ENCODE measurements at regions of chr2 and their contacts with region 1.

Region 1: GRCh38 chr2:125572660-125573059 is 1083.3 kb upstream of the GYPC start:
- DNase-seq: no peak
- H3K4me3 ChIP-seq: no peak overlapping the region
- H3K27ac ChIP-seq: no peak overlapping the region
- H3K4me1 ChIP-seq: no peaks in the 10 kb centered on the region
- H3K27me3 ChIP-seq: no peaks in the 10 kb centered on the region
- CTCF ChIP-seq: no peak
- EP300 ChIP-seq: no peak
- POLR2A ChIP-seq: no peak

Region 2: GRCh38 chr2:125063682-125064081 is 509.0 kb before region 1 on chr2:
- in situ Hi-C with region 1: no loop called
- intact Hi-C with region 1: no loop called
- DNase-seq: no peak
- H3K4me3 ChIP-seq: no peak overlapping the region
- H3K27ac ChIP-seq: no peak overlapping the region
- H3K4me1 ChIP-seq: no peaks in the 10 kb centered on the region
- H3K27me3 ChIP-seq: no peaks in the 10 kb centered on the region
- CTCF ChIP-seq: no peak
- EP300 ChIP-seq: no peak
- POLR2A ChIP-seq: no peak

Region 3: GRCh38 chr2:125364192-125364983 is 208.3 kb before region 1 on chr2:
- in situ Hi-C with region 1: no loop called
- intact Hi-C with region 1: no loop called
- DNase-seq: no peak
- H3K4me3 ChIP-seq: no peak overlapping the region
- H3K27ac ChIP-seq: no peak overlapping the region
- H3K4me1 ChIP-seq: no peaks in the 10 kb centered on the region
- H3K27me3 ChIP-seq: no peaks in the 10 kb centered on the region
- CTCF ChIP-seq: no peak
- EP300 ChIP-seq: no peak
- POLR2A ChIP-seq: no peak

Region 4: GRCh38 chr2:125596612-125597011 is 24.0 kb after region 1 on chr2:
- in situ Hi-C with region 1: no loop called
- intact Hi-C with region 1: loop called (anchors 1 kb)
- DNase-seq: no peak
- H3K4me3 ChIP-seq: no peak overlapping the region
- H3K27ac ChIP-seq: no peak overlapping the region
- H3K4me1 ChIP-seq: no peaks in the 10 kb centered on the region
- H3K27me3 ChIP-seq: no peaks in the 10 kb centered on the region
- CTCF ChIP-seq: no peak
- EP300 ChIP-seq: no peak
- POLR2A ChIP-seq: no peak